Naive thymus-derived CD4-positive, alpha-beta T cell (primary cell): ENCODE measurements at regions of chr5 and their contacts with region 1.

Region 1: DNA sequence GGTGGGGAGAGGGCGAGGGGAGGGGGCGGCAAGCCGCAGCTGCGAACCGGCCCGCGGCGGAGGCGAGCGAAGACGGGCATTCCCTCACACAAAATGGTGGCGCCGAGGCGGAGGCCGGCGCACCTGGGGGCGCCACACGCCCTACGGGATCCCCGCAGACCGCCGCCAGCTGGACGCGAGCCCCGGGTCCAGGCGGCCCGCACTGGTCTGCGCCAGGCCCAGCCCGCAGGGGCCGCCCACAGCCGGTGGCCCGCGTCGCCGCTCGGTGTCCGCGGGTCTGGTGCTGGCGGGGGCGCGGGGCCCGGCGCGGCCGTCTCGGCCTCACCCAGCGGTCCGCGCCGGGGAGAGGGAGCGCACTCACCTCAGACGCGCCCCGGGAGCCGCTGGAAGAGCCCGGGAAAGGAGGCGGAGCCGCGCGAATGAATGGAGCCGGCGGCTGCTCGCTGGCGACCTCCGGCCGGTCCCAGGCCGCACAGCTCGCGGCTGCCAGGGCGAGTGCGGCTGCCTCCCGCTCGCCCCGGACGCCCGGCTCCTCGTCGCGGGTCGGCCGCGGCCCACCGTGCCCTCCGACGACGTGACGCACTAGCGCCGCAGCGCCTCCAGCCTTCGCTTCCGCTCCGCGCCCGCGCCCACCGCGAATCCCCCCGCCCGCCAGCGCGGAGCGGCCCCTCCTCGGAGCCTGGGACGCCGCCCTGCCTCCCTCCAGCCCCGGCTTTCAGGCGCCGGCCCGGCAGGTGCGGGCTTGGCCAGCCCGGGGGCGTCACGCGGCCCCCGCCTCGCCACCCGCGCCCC is at the start of gene FAM169A:
- DNase-seq: peak; percentile 40 to 71 (median 61)
- ATAC-seq: peak; percentile 81
- H3K4me3 ChIP-seq: peak within 1 kb of the TSS; percentile 69
- H3K4me3 Mint-ChIP-seq: peak within 1 kb of the TSS; percentile 87 to 99 (median 97)
- H3K27ac ChIP-seq: peak within 1 kb of the TSS; percentile 78
- H3K27ac Mint-ChIP-seq: peak within 1 kb of the TSS; percentile 79 to 97 (median 95)
- H3K4me1 ChIP-seq: peaks cover 4 to 8% of the 10 kb centered on the region in 2 donors
- H3K4me1 Mint-ChIP-seq: peaks cover 7 to 49% (median 42%) of the 10 kb centered on the region in 7 donors
- H3K27me3 ChIP-seq: no peaks in the 10 kb centered on the region
- H3K27me3 Mint-ChIP-seq: peaks cover 0 to 26% (median 0%) of the 10 kb centered on the region in 5 donors
- total RNA-seq, gene FAM169A: 2.3 to 22.4 (median 15.6) TPM

Region 2: GRCh38 chr5:74684900-74685851 is 180.8 kb before region 1 on chr5 and contains the start of gene HEXB:
- CTCF ChIA-PET with region 1: no interaction called
- POLR2A ChIA-PET with region 1: no interaction called
- intact Hi-C with region 1: loop called in 1 of 2 experiments (anchors 5 kb)
- DNase-seq: peak; percentile 55 to 89 (median 69)
- ATAC-seq: peak; percentile 91
- H3K4me3 ChIP-seq: peak within 1 kb of the TSS; percentile 86
- H3K4me3 Mint-ChIP-seq: peak within 1 kb of the TSS; percentile 76 to 92 (median 86)
- H3K27ac ChIP-seq: peak within 1 kb of the TSS; percentile 78
- H3K27ac Mint-ChIP-seq: peak within 1 kb of the TSS; percentile 76 to 92 (median 86)
- H3K4me1 ChIP-seq: peaks cover 7 to 13% of the 10 kb centered on the region in 2 donors
- H3K4me1 Mint-ChIP-seq: peaks cover 16 to 34% (median 30%) of the 10 kb centered on the region in 7 donors
- H3K27me3 ChIP-seq: no peaks in the 10 kb centered on the region
- H3K27me3 Mint-ChIP-seq: peaks cover 0 to 17% (median 0%) of the 10 kb centered on the region in 5 donors
- total RNA-seq, gene HEXB: 37.7 to 88.9 (median 64.2) TPM

Region 3: GRCh38 chr5:74851684-74852353 is 14.2 kb before region 1 on chr5:
- CTCF ChIA-PET with region 1: interaction called, 3 read pairs
- POLR2A ChIA-PET with region 1: interaction called, 4 read pairs
- intact Hi-C with region 1: loop called in 1 of 2 experiments (anchors 1 kb)
- DNase-seq: no peak
- ATAC-seq: no peak
- H3K4me3 ChIP-seq: no peak overlapping the region
- H3K4me3 Mint-ChIP-seq: peak overlapping the region; percentile 18 to 67 (median 50)
- H3K27ac ChIP-seq: no peak overlapping the region
- H3K27ac Mint-ChIP-seq: peak overlapping the region in 5 of 9 donors; percentile 0 to 89 (median 22)
- H3K4me1 ChIP-seq: peaks cover 0 to 12% of the 10 kb centered on the region in 2 donors
- H3K4me1 Mint-ChIP-seq: peaks cover 19 to 80% (median 67%) of the 10 kb centered on the region in 7 donors
- H3K27me3 ChIP-seq: no peaks in the 10 kb centered on the region
- H3K27me3 Mint-ChIP-seq: no peaks in the 10 kb centered on the region

Region 4: GRCh38 chr5:75214928-75215327 is 348.9 kb after region 1 on chr5:
- CTCF ChIA-PET with region 1: no interaction called
- POLR2A ChIA-PET with region 1: no interaction called
- intact Hi-C with region 1: no loop called
- DNase-seq: no peak
- ATAC-seq: no peak
- H3K4me3 ChIP-seq: no peak overlapping the region
- H3K4me3 Mint-ChIP-seq: no peak overlapping the region
- H3K27ac ChIP-seq: no peak overlapping the region
- H3K27ac Mint-ChIP-seq: no peak overlapping the region
- H3K4me1 ChIP-seq: no peaks in the 10 kb centered on the region
- H3K4me1 Mint-ChIP-seq: peaks cover 0 to 14% (median 7%) of the 10 kb centered on the region in 7 donors
- H3K27me3 ChIP-seq: no peaks in the 10 kb centered on the region
- H3K27me3 Mint-ChIP-seq: peaks cover 0 to 3% (median 0%) of the 10 kb centered on the region in 5 donors

Region 5: GRCh38 chr5:75717082-75717922 is 851.3 kb after region 1 on chr5 and contains the start of gene POC5:
- CTCF ChIA-PET with region 1: no interaction called
- POLR2A ChIA-PET with region 1: no interaction called
- intact Hi-C with region 1: loop called in 1 of 2 experiments (anchors 2 kb)
- DNase-seq: peak; percentile 93 to 99 (median 98)
- ATAC-seq: peak; percentile 97
- H3K4me3 ChIP-seq: peak within 1 kb of the TSS; percentile 74
- H3K4me3 Mint-ChIP-seq: peak within 1 kb of the TSS; percentile 93 to 100 (median 99)
- H3K27ac ChIP-seq: peak within 1 kb of the TSS; percentile 78
- H3K27ac Mint-ChIP-seq: peak within 1 kb of the TSS; percentile 92 to 100 (median 97)
- H3K4me1 ChIP-seq: peaks cover 5 to 8% of the 10 kb centered on the region in 2 donors
- H3K4me1 Mint-ChIP-seq: peaks cover 26 to 47% (median 37%) of the 10 kb centered on the region in 7 donors
- H3K27me3 ChIP-seq: no peaks in the 10 kb centered on the region
- H3K27me3 Mint-ChIP-seq: peaks cover 0 to 10% (median 0%) of the 10 kb centered on the region in 5 donors
- total RNA-seq, gene POC5: 8.5 to 17.9 (median 15.0) TPM